ENCODE measurements at regions of chr12 and their contacts with region 1.

Region 1: DNA sequence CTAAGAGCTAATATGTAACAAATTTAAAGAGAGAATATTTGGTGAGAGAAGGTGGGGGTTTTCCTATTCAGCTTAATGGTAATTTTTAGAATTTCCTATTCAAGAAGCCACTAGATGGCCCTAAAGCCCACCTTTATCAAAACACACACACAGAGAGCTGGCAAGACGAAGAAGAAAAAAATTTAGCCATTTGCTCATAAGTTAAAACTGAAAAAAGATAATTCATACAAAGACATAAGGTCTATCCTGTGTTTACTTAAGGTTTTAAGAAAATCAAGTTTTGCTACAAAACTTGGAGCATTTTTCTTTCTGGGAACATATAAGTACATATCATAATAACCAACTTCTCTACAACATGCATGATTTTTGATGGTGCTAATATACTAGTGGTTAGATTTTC is 46.8 kb upstream of the PCED1B start:
- DNase-seq: no peak
- H3K4me3 Mint-ChIP-seq: no peak overlapping the region
- H3K27ac Mint-ChIP-seq: no peak overlapping the region
- H3K4me1 Mint-ChIP-seq: peaks cover 11% of the 10 kb centered on the region
- H3K27me3 Mint-ChIP-seq: peaks cover 6% of the 10 kb centered on the region

Region 2: GRCh38 chr12:47111392-47111778 is 78.7 kb after region 1 on chr12:
- intact Hi-C with region 1: loop called (anchors 2 kb)
- DNase-seq: no peak
- H3K4me3 Mint-ChIP-seq: no peak overlapping the region
- H3K27ac Mint-ChIP-seq: peak overlapping the region; percentile 83
- H3K4me1 Mint-ChIP-seq: peaks cover 26% of the 10 kb centered on the region
- H3K27me3 Mint-ChIP-seq: no peaks in the 10 kb centered on the region

Region 3: GRCh38 chr12:47307680-47308399 is 275.2 kb after region 1 on chr12:
- intact Hi-C with region 1: loop called (anchors 1 kb)
- DNase-seq: peak; percentile 43
- H3K4me3 Mint-ChIP-seq: peak overlapping the region; percentile 91
- H3K27ac Mint-ChIP-seq: peak overlapping the region; percentile 87
- H3K4me1 Mint-ChIP-seq: peaks cover 69% of the 10 kb centered on the region
- H3K27me3 Mint-ChIP-seq: no peaks in the 10 kb centered on the region

Region 4: GRCh38 chr12:47413806-47414205 is 381.2 kb after region 1 on chr12:
- intact Hi-C with region 1: loop called (anchors 5 kb)
- DNase-seq: no peak
- H3K4me3 Mint-ChIP-seq: no peak overlapping the region
- H3K27ac Mint-ChIP-seq: peak overlapping the region; percentile 12
- H3K4me1 Mint-ChIP-seq: peaks cover 46% of the 10 kb centered on the region
- H3K27me3 Mint-ChIP-seq: no peaks in the 10 kb centered on the region

Region 5: DNA sequence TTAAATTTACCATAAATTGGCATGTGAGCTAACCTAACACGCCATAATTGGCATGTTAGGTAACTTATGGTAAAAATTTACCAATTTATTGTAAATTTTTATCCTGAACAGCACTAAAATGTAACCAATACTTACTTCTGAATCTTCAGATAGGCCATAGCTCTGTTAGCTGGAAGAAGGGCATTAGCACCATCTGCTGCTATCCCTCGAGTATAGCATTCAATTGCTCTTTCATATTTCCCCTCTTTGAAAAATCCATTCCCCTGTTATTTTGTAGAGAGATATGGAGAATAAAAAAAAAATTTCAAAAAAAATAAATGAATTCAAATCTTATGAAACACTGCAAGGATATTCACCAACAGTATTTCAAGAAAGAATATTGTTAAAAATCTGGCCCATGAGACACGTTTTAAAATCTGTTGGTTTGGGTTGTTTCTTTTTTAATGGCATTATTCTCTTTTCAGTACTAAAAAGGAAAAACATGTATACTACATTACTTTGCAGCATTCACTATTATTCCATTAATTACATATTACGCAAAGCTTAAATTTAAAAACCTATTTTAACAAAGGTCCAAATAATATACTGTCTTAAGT is 654.1 kb after region 1 on chr12:
- intact Hi-C with region 1: loop called (anchors 1 kb)
- DNase-seq: no peak
- H3K4me3 Mint-ChIP-seq: no peak overlapping the region
- H3K27ac Mint-ChIP-seq: no peak overlapping the region
- H3K4me1 Mint-ChIP-seq: peaks cover 7% of the 10 kb centered on the region
- H3K27me3 Mint-ChIP-seq: no peaks in the 10 kb centered on the region